Lower lobe of right lung (tissue), 2 donors: ENCODE measurements at regions of chr10 and their contacts with region 1.

Region 1: GRCh38 chr10:80444646-80445319 is 9.3 kb upstream of the TSPAN14 start:
- DNase-seq: peak; percentile 77
- ATAC-seq: peak; percentile 88 to 93
- H3K4me3 ChIP-seq: no peak overlapping the region
- H3K27ac ChIP-seq: peak overlapping the region; percentile 22
- H3K4me1 ChIP-seq: peaks cover 55% of the 10 kb centered on the region
- H3K27me3 ChIP-seq: no peaks in the 10 kb centered on the region
- CTCF ChIP-seq: peak; percentile 79

Region 2: GRCh38 chr10:80500572-80501380 is 56.0 kb after region 1 on chr10:
- intact Hi-C with region 1: loop called (anchors 10 kb)
- DNase-seq: no peak
- ATAC-seq: no peak
- H3K4me3 ChIP-seq: no peak overlapping the region
- H3K27ac ChIP-seq: peak overlapping the region; percentile 83
- H3K4me1 ChIP-seq: peaks cover 100% of the 10 kb centered on the region
- H3K27me3 ChIP-seq: no peaks in the 10 kb centered on the region
- CTCF ChIP-seq: no peak